ENCODE measurements at regions of chr4 and their contacts with region 1.

Region 1: GRCh38 chr4:17324386-17324830 is 187.5 kb downstream of the QDPR start:
- DNase-seq: no peak

Region 2: DNA sequence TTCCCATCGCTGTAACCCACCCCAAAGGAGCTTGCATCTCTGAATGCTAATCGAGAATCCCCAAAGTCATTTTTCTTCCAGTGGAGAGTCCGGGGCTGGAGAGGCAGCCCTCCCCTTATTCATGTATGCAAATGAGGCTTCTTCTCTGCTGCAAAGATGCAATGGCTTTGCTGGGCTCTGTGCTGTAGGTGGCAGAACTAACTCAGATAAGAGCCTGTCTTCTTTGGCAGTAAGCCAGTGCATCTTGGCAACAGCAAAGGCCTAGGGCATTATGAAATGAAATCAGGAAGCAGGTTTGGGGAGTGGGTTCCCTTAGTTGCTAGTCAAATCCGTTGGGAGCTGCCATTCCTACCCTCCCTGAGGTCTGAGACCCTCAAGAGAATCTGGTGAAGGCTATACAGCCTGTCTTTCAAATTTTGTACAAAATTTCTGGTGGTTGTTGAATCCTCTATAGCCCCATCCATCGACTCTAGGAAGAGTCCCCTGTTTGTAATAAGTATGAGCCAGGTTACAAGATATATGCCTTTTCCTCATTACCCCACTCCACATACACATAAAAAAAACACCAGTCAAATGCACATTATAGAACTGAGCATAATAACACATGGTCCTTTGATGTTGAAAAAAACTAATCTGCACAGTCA is 807.5 kb before region 1 on chr4:
- intact Hi-C with region 1: loop called (anchors 10 kb)
- DNase-seq: no peak

Region 3: GRCh38 chr4:16794816-16795445 is 529.5 kb before region 1 on chr4:
- intact Hi-C with region 1: loop called (anchors 2 kb)
- DNase-seq: no peak

Region 4: GRCh38 chr4:16916719-16917337 is 407.6 kb before region 1 on chr4:
- intact Hi-C with region 1: loop called (anchors 5 kb)
- DNase-seq: no peak

Region 5: GRCh38 chr4:17173300-17173699 is 151.1 kb before region 1 on chr4:
- intact Hi-C with region 1: loop called (anchors 5 kb)
- DNase-seq: no peak

Region 6: DNA sequence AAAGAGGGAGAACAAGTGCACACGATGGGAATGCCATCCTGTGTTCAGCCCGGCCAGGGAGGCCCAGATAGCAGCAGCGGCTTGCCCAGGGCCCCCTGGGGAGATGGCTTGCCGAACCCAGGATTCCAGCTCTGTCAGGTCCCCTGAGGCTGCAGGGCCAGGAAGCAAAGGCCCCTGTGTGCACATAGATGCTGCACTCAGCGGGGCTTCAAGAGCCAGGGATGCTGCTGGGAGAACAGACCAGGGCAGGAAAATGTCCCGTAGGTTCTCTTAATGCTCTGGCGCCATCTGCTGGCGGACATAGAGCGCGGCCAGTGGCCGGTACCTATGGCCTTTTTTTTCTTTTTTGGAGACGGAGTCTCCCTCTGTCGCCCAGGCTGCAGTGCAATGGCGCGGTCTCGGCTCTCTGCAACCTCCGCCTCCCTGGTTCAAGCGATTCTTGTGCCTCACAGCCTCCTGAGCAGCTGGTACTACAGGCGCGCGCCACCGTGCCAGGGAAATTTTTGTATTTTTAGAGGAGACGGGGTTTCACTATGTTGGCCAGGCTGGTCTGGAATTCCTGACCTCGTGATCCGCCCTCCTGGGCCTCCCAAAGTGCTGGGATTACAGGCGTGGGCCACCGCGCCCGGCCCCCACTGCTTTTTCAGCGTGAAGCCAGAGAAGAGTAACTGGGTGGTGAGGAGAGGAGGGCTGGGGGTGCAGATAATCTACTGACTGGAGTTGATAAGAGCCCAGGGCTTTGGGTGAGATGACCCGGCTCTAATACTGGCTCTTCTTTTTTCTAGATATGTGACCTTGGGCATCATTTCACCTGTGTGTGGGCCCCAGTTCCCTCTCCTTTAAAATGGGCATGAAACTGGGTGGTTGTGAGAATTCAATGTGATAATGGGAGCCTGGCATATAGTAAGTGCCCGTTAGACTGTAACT is 312.6 kb after region 1 on chr4:
- intact Hi-C with region 1: no loop called
- DNase-seq: peak; percentile 80